ENCODE measurements at regions of chr12 and their contacts with region 1.

Region 1: DNA sequence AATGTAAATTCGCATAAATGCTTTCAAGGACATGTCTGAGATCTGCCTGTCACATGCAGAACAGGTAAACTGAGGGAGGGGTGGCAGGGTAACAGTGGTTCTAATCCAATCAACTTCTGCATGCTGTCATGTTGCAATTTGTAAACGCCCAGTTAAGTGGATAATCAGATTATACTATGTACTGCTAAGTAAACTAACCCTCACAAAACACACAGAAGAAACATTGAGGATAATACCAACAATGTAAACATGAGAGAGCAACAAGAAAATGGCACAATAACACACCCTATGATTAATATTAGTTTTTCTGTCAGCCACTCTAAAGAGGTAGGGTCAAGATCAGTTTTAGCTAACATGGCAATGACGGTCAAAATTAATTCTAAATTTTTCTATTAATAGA is 123.7 kb downstream of the KIF21A start:
- DNase-seq: no peak
- ATAC-seq: no peak

Region 2: DNA sequence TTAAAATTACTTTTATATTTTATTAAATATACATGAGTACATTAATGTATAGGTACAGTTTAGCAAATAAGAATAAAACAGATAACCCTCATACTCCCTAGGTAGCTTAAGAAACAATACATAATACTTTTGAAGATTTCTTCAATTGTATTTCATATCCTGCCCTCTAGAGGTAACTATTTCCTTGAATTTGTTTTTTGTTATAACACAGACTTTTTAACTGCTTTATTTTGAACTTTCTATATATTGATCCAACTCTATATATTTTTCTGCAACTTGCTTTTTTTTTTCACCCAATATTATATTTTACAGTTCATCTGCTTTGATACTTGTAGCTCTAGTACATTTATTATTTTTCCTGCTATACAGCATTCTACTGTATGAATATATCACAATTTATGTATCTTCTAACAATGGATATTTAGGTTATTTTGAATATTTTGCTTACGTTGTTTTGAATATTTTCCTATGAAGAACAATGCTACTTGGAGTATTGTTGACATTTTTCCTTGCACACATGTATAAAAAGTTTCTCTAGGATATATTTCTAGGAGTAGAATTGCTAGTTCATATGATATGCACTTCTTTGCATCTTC is 373.2 kb after region 1 on chr12:
- intact Hi-C with region 1: loop called in 1 of 2 experiments (anchors 10 kb)
- DNase-seq: no peak
- ATAC-seq: no peak